B cell (primary cell): ENCODE measurements at regions of chr6 and their contacts with region 1.

Region 1: GRCh38 chr6:27893059-27893835 is 18.9 kb downstream of the OR2B2 start:
- DNase-seq: peak; percentile 97
- ATAC-seq: peak; percentile 67
- H3K4me3 ChIP-seq: peak overlapping the region; percentile 68 to 100 (median 88)
- H3K4me3 Mint-ChIP-seq: no peak overlapping the region
- H3K27ac ChIP-seq: peak overlapping the region; percentile 76 to 77
- H3K27ac Mint-ChIP-seq: no peak overlapping the region
- H3K4me1 ChIP-seq: peaks cover 18 to 38% of the 10 kb centered on the region in 2 donors
- H3K4me1 Mint-ChIP-seq: peaks cover 36% of the 10 kb centered on the region
- H3K27me3 ChIP-seq: no peaks in the 10 kb centered on the region
- H3K27me3 Mint-ChIP-seq: no peaks in the 10 kb centered on the region
- CTCF ChIP-seq: no peak

Region 2: GRCh38 chr6:26596579-26597388 is 1296.5 kb before region 1 on chr6 and contains the start of gene ABT1:
- CTCF ChIA-PET with region 1: interaction called, 3 read pairs
- POLR2A ChIA-PET with region 1: no interaction called
- intact Hi-C with region 1: loop called (anchors 5 kb)
- DNase-seq: peak; percentile 98
- ATAC-seq: peak; percentile 93
- H3K4me3 ChIP-seq: peak within 1 kb of the TSS; percentile 84 to 99 (median 91)
- H3K4me3 Mint-ChIP-seq: no peak within 1 kb of the TSS
- H3K27ac ChIP-seq: peak within 1 kb of the TSS; percentile 88 to 89
- H3K27ac Mint-ChIP-seq: no peak within 1 kb of the TSS
- H3K4me1 ChIP-seq: peaks cover 14 to 24% of the 10 kb centered on the region in 2 donors
- H3K4me1 Mint-ChIP-seq: peaks cover 20% of the 10 kb centered on the region
- H3K27me3 ChIP-seq: peaks cover 2 to 20% (median 9%) of the 10 kb centered on the region in 4 experiments
- H3K27me3 Mint-ChIP-seq: peaks cover 8% of the 10 kb centered on the region
- CTCF ChIP-seq: no peak
- total RNA-seq, gene ABT1: 28.6 and 29.8 TPM in 2 replicates

Region 3: DNA sequence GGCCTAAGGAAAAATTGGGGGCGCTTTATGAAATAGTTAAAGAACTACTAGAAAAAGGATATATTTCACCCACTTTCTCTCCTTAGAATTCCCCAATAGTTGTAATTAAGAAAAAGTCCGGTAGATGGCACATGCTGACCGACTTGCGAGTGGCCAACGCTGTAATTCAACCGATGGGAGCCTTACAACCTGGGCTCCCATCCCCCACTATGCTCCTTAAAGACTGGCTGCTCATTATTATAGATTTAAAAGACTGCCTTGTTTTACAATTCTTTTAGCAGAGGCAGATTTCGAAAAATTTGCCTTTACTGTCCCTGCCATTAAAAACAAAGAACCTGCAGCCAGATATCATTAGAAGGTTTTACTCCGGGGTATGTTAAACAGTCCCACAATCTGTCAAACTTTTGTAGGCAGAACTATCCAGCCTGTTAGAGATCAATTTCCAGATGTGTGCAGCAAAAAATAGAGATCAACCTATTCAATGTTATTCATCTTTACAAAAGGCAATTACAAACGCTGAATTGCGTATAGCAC is 704.3 kb before region 1 on chr6:
- CTCF ChIA-PET with region 1: interaction called, 11 read pairs
- POLR2A ChIA-PET with region 1: no interaction called
- intact Hi-C with region 1: loop called (anchors 1 kb)
- DNase-seq: peak; percentile 84
- ATAC-seq: peak; percentile 90
- H3K4me3 ChIP-seq: peak overlapping the region; percentile 55 to 78 (median 67)
- H3K4me3 Mint-ChIP-seq: peak overlapping the region; percentile 93
- H3K27ac ChIP-seq: peak overlapping the region in 1 of 2 donors; percentile 48
- H3K27ac Mint-ChIP-seq: peak overlapping the region; percentile 32
- H3K4me1 ChIP-seq: peaks cover 6 to 12% of the 10 kb centered on the region in 2 donors
- H3K4me1 Mint-ChIP-seq: peaks cover 8% of the 10 kb centered on the region
- H3K27me3 ChIP-seq: peaks cover 0 to 4% (median 0%) of the 10 kb centered on the region in 4 experiments
- H3K27me3 Mint-ChIP-seq: peaks cover 3% of the 10 kb centered on the region
- CTCF ChIP-seq: peak; percentile 85

Region 4: GRCh38 chr6:27672113-27672799 is 221.0 kb before region 1 on chr6:
- CTCF ChIA-PET with region 1: no interaction called
- POLR2A ChIA-PET with region 1: no interaction called
- intact Hi-C with region 1: loop called (anchors 5 kb)
- DNase-seq: peak; percentile 48
- ATAC-seq: no peak
- H3K4me3 ChIP-seq: peak overlapping the region in 1 of 5 experiments; percentile 24
- H3K4me3 Mint-ChIP-seq: peak overlapping the region; percentile 23
- H3K27ac ChIP-seq: no peak overlapping the region
- H3K27ac Mint-ChIP-seq: peak overlapping the region; percentile 41
- H3K4me1 ChIP-seq: peaks cover 21 to 22% of the 10 kb centered on the region in 2 donors
- H3K4me1 Mint-ChIP-seq: peaks cover 27% of the 10 kb centered on the region
- H3K27me3 ChIP-seq: peaks cover 0 to 75% (median 61%) of the 10 kb centered on the region in 4 experiments
- H3K27me3 Mint-ChIP-seq: peaks cover 71% of the 10 kb centered on the region
- CTCF ChIP-seq: no peak

Region 5: DNA sequence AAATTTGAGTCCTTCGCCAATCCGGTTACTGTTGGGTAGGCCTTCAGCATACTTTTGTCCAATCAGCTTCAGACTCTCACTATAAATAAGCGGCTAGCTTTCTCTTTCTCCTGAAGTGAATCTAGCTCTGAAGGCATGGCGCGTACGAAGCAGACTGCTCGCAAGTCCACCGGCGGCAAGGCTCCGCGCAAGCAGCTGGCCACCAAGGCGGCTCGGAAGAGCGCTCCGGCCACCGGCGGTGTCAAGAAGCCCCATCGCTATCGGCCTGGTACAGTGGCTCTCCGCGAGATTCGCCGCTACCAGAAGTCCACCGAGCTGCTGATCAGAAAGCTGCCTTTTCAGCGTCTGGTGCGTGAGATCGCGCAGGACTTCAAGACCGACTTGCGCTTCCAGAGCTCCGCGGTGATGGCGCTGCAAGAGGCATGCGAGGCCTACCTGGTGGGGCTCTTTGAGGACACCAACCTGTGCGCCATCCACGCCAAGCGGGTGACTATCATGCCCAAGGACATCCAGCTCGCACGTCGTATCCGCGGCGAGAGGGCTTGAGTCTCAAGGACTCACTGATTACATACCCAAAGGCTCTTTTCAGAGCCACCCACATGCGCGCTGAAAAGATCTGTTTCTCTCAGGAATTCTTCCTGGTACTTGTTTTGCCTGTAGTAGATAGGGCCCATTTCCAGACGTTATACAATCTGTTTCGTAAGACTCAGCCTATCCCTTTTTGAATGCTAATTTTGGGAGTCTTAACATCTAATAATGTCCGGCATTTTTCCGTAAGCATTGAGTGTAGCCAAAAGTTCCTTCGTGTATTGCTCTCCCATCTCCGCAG is 83.1 kb before region 1 on chr6:
- CTCF ChIA-PET with region 1: interaction called, 92 read pairs
- POLR2A ChIA-PET with region 1: interaction called, 58 read pairs
- intact Hi-C with region 1: loop called (anchors 1 kb)
- DNase-seq: peak; percentile 96
- ATAC-seq: peak; percentile 50
- H3K4me3 ChIP-seq: peak overlapping the region; percentile 66 to 94 (median 84)
- H3K4me3 Mint-ChIP-seq: peak overlapping the region; percentile 98
- H3K27ac ChIP-seq: peak overlapping the region; percentile 82
- H3K27ac Mint-ChIP-seq: peak overlapping the region; percentile 99
- H3K4me1 ChIP-seq: peaks cover 37 to 47% of the 10 kb centered on the region in 2 donors
- H3K4me1 Mint-ChIP-seq: peaks cover 58% of the 10 kb centered on the region
- H3K27me3 ChIP-seq: no peaks in the 10 kb centered on the region
- H3K27me3 Mint-ChIP-seq: no peaks in the 10 kb centered on the region
- CTCF ChIP-seq: no peak

Region 6: DNA sequence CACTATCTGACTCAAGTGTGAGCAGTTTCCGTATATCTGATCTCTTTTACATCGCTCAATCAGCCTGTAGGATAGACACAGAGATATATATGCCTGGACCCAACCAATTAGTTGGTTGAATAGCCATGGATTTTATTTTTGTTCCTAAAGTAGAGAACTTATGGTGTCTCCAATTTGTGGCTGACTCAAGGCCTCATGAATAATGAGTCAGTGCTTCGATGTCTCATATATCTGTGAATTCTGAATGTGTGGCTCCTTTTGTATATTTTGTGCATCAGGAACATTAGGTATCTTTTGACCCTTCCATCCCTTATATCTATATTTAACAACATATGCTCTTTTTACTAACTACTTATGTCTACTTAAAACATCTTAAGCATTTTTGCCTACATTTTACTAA is 45.5 kb before region 1 on chr6:
- CTCF ChIA-PET with region 1: no interaction called
- POLR2A ChIA-PET with region 1: no interaction called
- intact Hi-C with region 1: no loop called
- DNase-seq: no peak
- ATAC-seq: no peak
- H3K4me3 ChIP-seq: no peak overlapping the region
- H3K4me3 Mint-ChIP-seq: no peak overlapping the region
- H3K27ac ChIP-seq: no peak overlapping the region
- H3K27ac Mint-ChIP-seq: no peak overlapping the region
- H3K4me1 ChIP-seq: no peaks in the 10 kb centered on the region
- H3K4me1 Mint-ChIP-seq: no peaks in the 10 kb centered on the region
- H3K27me3 ChIP-seq: no peaks in the 10 kb centered on the region
- H3K27me3 Mint-ChIP-seq: no peaks in the 10 kb centered on the region
- CTCF ChIP-seq: no peak

Region 7: GRCh38 chr6:28335564-28336283 is 442.5 kb after region 1 on chr6 and contains the start of gene ZSCAN31:
- CTCF ChIA-PET with region 1: no interaction called
- POLR2A ChIA-PET with region 1: no interaction called
- intact Hi-C with region 1: loop called (anchors 5 kb)
- DNase-seq: peak; percentile 89
- ATAC-seq: peak; percentile 87
- H3K4me3 ChIP-seq: peak within 1 kb of the TSS; percentile 72 to 98 (median 86)
- H3K4me3 Mint-ChIP-seq: no peak within 1 kb of the TSS
- H3K27ac ChIP-seq: peak within 1 kb of the TSS; percentile 95 to 96
- H3K27ac Mint-ChIP-seq: no peak within 1 kb of the TSS
- H3K4me1 ChIP-seq: peaks cover 11 to 18% of the 10 kb centered on the region in 2 donors
- H3K4me1 Mint-ChIP-seq: no peaks in the 10 kb centered on the region
- H3K27me3 ChIP-seq: no peaks in the 10 kb centered on the region
- H3K27me3 Mint-ChIP-seq: no peaks in the 10 kb centered on the region
- CTCF ChIP-seq: no peak
- total RNA-seq, gene ZSCAN31: 2.9 and 4.6 TPM in 2 replicates

Region 8: GRCh38 chr6:28771401-28772267 is 878.4 kb after region 1 on chr6:
- CTCF ChIA-PET with region 1: no interaction called
- POLR2A ChIA-PET with region 1: no interaction called
- intact Hi-C with region 1: no loop called
- DNase-seq: no peak
- ATAC-seq: no peak
- H3K4me3 ChIP-seq: no peak overlapping the region
- H3K4me3 Mint-ChIP-seq: no peak overlapping the region
- H3K27ac ChIP-seq: no peak overlapping the region
- H3K27ac Mint-ChIP-seq: no peak overlapping the region
- H3K4me1 ChIP-seq: peaks cover 0 to 9% of the 10 kb centered on the region in 2 donors
- H3K4me1 Mint-ChIP-seq: peaks cover 3% of the 10 kb centered on the region
- H3K27me3 ChIP-seq: peaks cover 0 to 97% (median 85%) of the 10 kb centered on the region in 4 experiments
- H3K27me3 Mint-ChIP-seq: peaks cover 91% of the 10 kb centered on the region
- CTCF ChIP-seq: no peak